OCI-LY7 (cell line): ENCODE measurements at regions of chr9 and their contacts with region 1.

Region 1: GRCh38 chr9:120698766-120699165 is 15.5 kb downstream of the MEGF9 start:
- DNase-seq: no peak
- H3K4me3 ChIP-seq: no peak overlapping the region
- H3K27ac ChIP-seq: no peak overlapping the region
- H3K4me1 ChIP-seq: no peaks in the 10 kb centered on the region
- CTCF ChIP-seq: no peak

Region 2: DNA sequence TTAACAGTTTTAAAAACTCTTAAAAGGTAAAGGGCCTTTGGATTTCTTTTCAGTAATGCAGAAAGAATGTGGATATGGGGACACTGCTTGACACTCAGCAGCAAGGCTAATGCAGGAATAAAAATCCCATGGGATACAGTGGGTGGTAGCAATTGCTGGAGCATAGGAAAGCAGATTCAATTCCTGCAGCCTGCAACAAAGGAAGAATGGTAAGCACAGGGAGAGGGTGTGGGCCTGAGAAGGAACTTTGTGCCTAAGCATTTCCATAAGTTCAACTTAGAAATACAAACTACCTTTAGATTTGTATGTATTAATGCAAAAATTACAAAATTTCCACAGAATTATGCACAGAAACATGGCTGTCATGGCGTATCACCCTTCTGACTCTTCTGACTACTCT is 53.0 kb before region 1 on chr9:
- CTCF ChIA-PET with region 1: no interaction called
- POLR2A ChIA-PET with region 1: no interaction called
- intact Hi-C with region 1: loop called (anchors 5 kb)
- DNase-seq: no peak
- H3K4me3 ChIP-seq: no peak overlapping the region
- H3K27ac ChIP-seq: no peak overlapping the region
- H3K4me1 ChIP-seq: no peaks in the 10 kb centered on the region
- CTCF ChIP-seq: no peak

Region 3: GRCh38 chr9:120725901-120726300 is 27.1 kb after region 1 on chr9:
- CTCF ChIA-PET with region 1: no interaction called
- POLR2A ChIA-PET with region 1: no interaction called
- intact Hi-C with region 1: no loop called
- DNase-seq: no peak
- H3K4me3 ChIP-seq: no peak overlapping the region
- H3K27ac ChIP-seq: no peak overlapping the region
- H3K4me1 ChIP-seq: peaks cover 5% of the 10 kb centered on the region
- CTCF ChIP-seq: no peak